Colonic mucosa (tissue), 4 donors: ENCODE measurements at regions of chr15 and their contacts with region 1.

Region 1: GRCh38 chr15:27448986-27449385 is 478.0 kb downstream of the GABRG3 start:
- DNase-seq: no peak
- H3K4me3 ChIP-seq: no peak overlapping the region
- H3K27ac ChIP-seq: no peak overlapping the region
- H3K4me1 ChIP-seq: no peaks in the 10 kb centered on the region
- H3K27me3 ChIP-seq: no peaks in the 10 kb centered on the region
- CTCF ChIP-seq: no peak

Region 2: GRCh38 chr15:27070841-27071240 is 378.1 kb before region 1 on chr15:
- intact Hi-C with region 1: no loop called
- DNase-seq: no peak
- H3K4me3 ChIP-seq: no peak overlapping the region
- H3K27ac ChIP-seq: no peak overlapping the region
- H3K4me1 ChIP-seq: no peaks in the 10 kb centered on the region
- H3K27me3 ChIP-seq: no peaks in the 10 kb centered on the region
- CTCF ChIP-seq: no peak

Region 3: DNA sequence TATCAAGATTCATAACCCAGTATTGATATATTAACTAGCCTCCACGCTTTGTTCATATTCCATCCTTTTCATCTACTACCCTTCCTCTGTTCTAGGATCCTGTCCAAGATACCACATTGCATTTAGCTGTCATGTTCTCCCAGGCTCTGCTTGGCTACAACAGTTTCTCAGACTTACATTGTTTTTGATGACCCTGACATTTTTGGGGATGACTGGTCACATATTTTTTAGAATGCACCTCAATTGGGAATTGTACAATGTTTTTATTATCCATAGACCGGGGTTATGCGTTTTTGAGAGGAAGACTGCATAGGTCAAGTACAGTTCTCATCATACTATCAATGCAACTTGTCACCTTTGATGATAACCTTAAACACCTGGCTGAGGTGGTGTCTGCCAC is 56.8 kb before region 1 on chr15:
- intact Hi-C with region 1: no loop called
- DNase-seq: no peak
- H3K4me3 ChIP-seq: no peak overlapping the region
- H3K27ac ChIP-seq: no peak overlapping the region
- H3K4me1 ChIP-seq: no peaks in the 10 kb centered on the region
- H3K27me3 ChIP-seq: no peaks in the 10 kb centered on the region
- CTCF ChIP-seq: no peak

Region 4: DNA sequence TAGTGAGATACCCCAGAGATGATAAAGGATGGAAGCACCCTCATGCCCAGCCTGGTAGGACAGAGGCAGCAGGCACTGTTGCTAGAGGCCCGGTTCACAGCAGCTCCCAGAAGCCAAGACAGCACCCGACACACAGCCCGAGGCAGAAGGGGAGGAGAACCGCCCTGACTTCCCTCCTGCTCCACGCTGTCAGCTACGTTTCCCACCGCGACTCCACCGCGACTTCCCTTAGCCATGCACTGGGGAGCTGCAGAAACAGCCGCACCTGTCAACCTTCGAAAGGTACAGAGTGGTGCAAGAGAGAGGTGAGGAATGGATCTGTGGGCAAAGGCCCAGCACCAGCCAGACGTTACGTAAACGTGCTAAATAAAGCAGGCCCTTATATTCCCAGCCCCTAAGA is 51.2 kb after region 1 on chr15:
- intact Hi-C with region 1: loop called (anchors 10 kb)
- DNase-seq: no peak
- H3K4me3 ChIP-seq: no peak overlapping the region
- H3K27ac ChIP-seq: no peak overlapping the region
- H3K4me1 ChIP-seq: no peaks in the 10 kb centered on the region
- H3K27me3 ChIP-seq: no peaks in the 10 kb centered on the region
- CTCF ChIP-seq: no peak